Esophagus squamous epithelium (tissue), 5 donors: ENCODE measurements at regions of chr3 and their contacts with region 1.

Region 1: DNA sequence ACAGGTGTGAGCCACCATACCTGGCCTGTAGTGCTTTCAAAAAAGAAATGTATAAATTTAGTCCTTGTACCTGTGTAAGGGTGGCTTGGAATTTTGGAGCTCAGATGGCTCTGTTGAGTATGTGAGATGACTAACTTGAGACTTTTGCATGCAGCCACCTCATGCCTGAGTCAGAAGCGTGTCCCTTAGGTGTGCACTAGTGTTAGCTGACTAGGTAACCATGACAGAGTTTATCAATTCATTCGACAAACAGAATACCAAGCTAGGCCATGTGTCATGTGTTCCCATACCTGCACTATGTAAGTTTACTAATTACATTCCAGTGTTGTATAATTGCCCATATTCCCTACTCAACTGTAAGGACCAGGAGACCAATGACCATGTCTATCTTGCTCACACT is 4.0 kb upstream of the ZNF639 start:
- DNase-seq: no peak
- H3K4me3 ChIP-seq: no peak overlapping the region
- H3K27ac ChIP-seq: no peak overlapping the region
- H3K4me1 ChIP-seq: peaks cover 0 to 28% (median 6%) of the 10 kb centered on the region in 3 donors
- H3K27me3 ChIP-seq: no peaks in the 10 kb centered on the region
- CTCF ChIP-seq: no peak
- POLR2A ChIP-seq: no peak

Region 2: DNA sequence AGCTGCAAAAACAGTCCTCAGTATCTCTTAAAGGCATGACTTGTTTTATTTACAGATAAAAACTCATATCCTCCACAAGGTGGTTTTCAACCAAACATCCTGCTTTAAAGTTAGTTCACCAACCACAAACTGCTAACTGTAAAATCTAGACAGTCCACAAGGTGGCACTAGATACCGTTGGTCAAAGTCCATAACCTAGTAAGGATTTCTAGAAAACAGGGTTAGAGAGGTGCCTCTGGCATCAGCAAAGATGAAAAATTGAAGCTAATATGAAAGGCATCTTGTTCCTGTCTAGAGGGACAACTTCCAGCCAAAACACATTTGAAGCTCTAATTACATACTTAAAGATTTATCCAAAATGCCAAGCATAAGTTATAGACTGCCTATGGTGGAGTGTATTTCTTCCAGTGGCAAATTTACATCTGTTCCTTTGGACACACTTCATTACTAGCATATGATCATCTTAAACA is 303.3 kb before region 1 on chr3:
- intact Hi-C with region 1: loop called (anchors 5 kb)
- DNase-seq: no peak
- H3K4me3 ChIP-seq: no peak overlapping the region
- H3K27ac ChIP-seq: no peak overlapping the region
- H3K4me1 ChIP-seq: peaks cover 0 to 8% (median 5%) of the 10 kb centered on the region in 3 donors
- H3K27me3 ChIP-seq: no peaks in the 10 kb centered on the region
- CTCF ChIP-seq: peak; percentile 80 to 92 (median 84)
- POLR2A ChIP-seq: no peak

Region 3: GRCh38 chr3:179147873-179148615 is 170.8 kb before region 1 on chr3 and contains the start of gene PIK3CA:
- intact Hi-C with region 1: loop called (anchors 5 kb)
- DNase-seq: peak; percentile 86
- H3K4me3 ChIP-seq: peak within 1 kb of the TSS; percentile 61 to 89 (median 71)
- H3K27ac ChIP-seq: peak within 1 kb of the TSS; percentile 96 to 99 (median 96)
- H3K4me1 ChIP-seq: peaks cover 0 to 42% (median 12%) of the 10 kb centered on the region in 3 donors
- H3K27me3 ChIP-seq: no peaks in the 10 kb centered on the region
- CTCF ChIP-seq: peak in 1 of 6 experiments; percentile 2
- POLR2A ChIP-seq: peak in 2 of 4 donors; percentile 53 to 78
- total RNA-seq, gene PIK3CA: 10.6 to 20.8 (median 17.2) TPM

Region 4: GRCh38 chr3:179464323-179465089 is 145.6 kb after region 1 on chr3:
- intact Hi-C with region 1: no loop called
- DNase-seq: no peak
- H3K4me3 ChIP-seq: peak overlapping the region in 1 of 4 donors; percentile 30
- H3K27ac ChIP-seq: peak overlapping the region in 3 of 4 donors; percentile 10 to 65 (median 17)
- H3K4me1 ChIP-seq: peaks cover 0 to 17% (median 4%) of the 10 kb centered on the region in 3 donors
- H3K27me3 ChIP-seq: no peaks in the 10 kb centered on the region
- CTCF ChIP-seq: no peak
- POLR2A ChIP-seq: no peak